Left colon (tissue), 2 donors: ENCODE measurements at regions of chr17 and their contacts with region 1.

Region 1: GRCh38 chr17:19766422-19767270 is 18.5 kb upstream of the ALDH3A1 start:
- DNase-seq: peak in 1 of 2 donors; percentile 85
- ATAC-seq: peak; percentile 95

Region 2: DNA sequence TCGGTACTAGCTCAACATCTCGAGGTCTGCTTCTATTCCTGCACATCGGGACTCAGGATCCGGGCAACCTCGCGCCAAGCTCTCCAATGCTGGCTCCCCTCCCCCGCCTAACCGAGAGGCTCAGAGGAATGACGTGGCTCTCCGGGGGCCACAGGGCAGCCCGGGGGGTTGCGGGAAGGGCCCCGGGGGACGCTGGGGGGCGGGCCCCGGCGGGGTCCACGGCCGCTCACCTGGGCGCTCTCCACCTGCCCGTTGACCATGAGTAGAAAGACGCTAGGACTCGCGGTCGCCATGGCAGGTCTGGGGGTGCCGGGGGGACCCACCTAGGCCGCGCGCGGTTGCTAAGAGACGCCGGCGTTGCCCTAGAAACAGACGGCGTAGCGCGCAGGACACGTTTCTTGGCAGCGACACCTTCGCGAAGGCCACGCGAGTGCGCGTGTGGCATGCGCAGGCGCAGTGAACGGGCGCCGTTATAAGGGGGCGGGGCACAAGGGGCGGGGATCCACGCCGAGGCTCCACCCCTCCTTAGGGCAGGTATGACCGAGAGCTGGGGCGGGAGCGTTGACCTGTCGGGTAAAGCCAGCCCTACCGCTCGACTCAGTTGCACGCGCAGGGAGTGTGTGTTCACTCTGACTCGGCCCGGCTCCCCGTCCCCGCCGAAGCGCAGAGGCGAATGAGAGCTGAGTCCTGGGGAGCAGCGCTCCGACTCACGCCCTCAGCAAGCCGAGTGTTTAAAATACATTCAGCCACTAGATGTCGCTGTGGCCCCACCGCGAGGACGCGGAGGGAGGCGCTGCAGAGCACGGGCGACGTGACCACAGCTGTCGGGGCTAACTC is 404.2 kb before region 1 on chr17 and contains the start of gene B9D1:
- intact Hi-C with region 1: loop called in 1 of 2 experiments (anchors 10 kb)
- DNase-seq: peak; percentile 90 to 95
- ATAC-seq: peak; percentile 94
- total RNA-seq, gene B9D1: 7.1 to 7.3 TPM

Region 3: GRCh38 chr17:19513897-19514488 is 252.7 kb before region 1 on chr17:
- intact Hi-C with region 1: loop called (anchors 5 to 10 kb)
- DNase-seq: peak in 1 of 2 donors; percentile 76
- ATAC-seq: peak; percentile 87

Region 4: GRCh38 chr17:19648475-19649406 is 117.9 kb before region 1 on chr17 and contains the start of gene ALDH3A2:
- intact Hi-C with region 1: loop called in 1 of 2 experiments (anchors 10 kb)
- DNase-seq: peak; percentile 97 to 98
- ATAC-seq: peak; percentile 94
- total RNA-seq, gene ALDH3A2: 105 to 114 TPM

Region 5: GRCh38 chr17:19728079-19728495 is 38.6 kb before region 1 on chr17:
- intact Hi-C with region 1: no loop called
- DNase-seq: peak; percentile 80 to 84
- ATAC-seq: peak; percentile 43

Region 6: GRCh38 chr17:19883537-19884215 is 117.0 kb after region 1 on chr17:
- intact Hi-C with region 1: no loop called
- DNase-seq: no peak
- ATAC-seq: no peak